Endothelial cell of umbilical vein (primary cell): ENCODE measurements at regions of chr12 and their contacts with region 1.

Region 1: DNA sequence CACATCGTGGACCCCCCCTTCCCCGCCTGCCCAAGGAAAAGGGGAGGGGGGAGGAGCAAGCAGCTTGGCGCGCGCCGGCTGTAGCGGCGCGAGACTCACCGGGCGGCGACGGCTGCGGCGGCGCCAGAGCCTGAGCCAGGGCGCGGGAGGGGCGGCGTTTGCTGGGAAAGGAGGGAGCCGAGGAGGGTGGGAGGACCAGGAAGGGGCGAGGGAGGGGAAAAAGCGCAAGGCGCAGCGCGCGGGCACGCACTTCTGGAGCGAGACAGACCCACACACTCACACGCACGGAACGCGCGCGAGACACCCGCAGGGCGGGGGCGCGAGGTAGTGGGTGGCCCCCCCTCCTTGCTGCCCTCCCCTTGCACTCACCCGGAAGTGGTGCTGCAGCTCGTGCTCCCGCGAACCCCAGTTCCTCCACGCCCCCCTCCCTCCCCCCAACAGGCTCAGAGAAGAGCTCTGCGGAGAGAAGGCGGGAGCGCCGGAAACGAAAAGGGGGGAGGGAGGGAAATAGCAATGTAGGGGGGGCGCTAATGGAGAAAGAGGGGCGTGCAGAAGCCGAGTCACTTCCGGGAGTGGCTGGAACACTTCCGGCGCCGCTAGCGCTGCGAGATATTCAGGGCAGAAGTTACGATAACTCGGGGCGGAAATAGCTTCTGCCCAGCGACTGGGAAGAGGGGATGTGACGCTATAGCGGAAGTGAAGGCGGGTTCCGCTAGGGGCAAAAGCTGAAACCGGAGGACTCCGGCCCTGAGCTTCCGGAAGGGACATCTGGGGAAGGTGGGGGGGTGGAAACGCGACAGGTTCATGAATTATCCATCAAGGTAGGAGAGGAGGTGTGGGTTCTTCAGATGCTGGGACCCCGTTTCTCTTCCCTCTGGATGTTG is at the start of gene ZNF384:
- DNase-seq: peak; percentile 98
- H3K4me3 ChIP-seq: peak within 1 kb of the TSS; percentile 65 to 99 (median 89)
- H3K27ac ChIP-seq: peak within 1 kb of the TSS; percentile 83
- H3K4me1 ChIP-seq: peaks cover 21% of the 10 kb centered on the region
- H3K27me3 ChIP-seq: no peaks in the 10 kb centered on the region
- CTCF ChIP-seq: peak in 1 of 2 donors; percentile 3
- POLR2A ChIP-seq: peak; percentile 92
- total RNA-seq, gene ZNF384: 52.8 and 58.5 TPM in 2 replicates

Region 2: GRCh38 chr12:6620137-6620884 is 68.9 kb before region 1 on chr12:
- CTCF ChIA-PET with region 1: interaction called, 21 read pairs
- POLR2A ChIA-PET with region 1: interaction called, 3 read pairs
- dilution Hi-C with region 1: no loop called
- intact Hi-C with region 1: loop called (anchors 1 kb)
- DNase-seq: peak; percentile 79
- H3K4me3 ChIP-seq: peak overlapping the region in 1 of 3 experiments; percentile 6
- H3K27ac ChIP-seq: no peak overlapping the region
- H3K4me1 ChIP-seq: no peaks in the 10 kb centered on the region
- H3K27me3 ChIP-seq: no peaks in the 10 kb centered on the region
- CTCF ChIP-seq: peak; percentile 85 to 89
- POLR2A ChIP-seq: no peak

Region 3: GRCh38 chr12:6672143-6672542 is 17.1 kb before region 1 on chr12:
- CTCF ChIA-PET with region 1: interaction called, 13 read pairs
- POLR2A ChIA-PET with region 1: interaction called, 3 read pairs
- dilution Hi-C with region 1: no loop called
- intact Hi-C with region 1: no loop called
- DNase-seq: no peak
- H3K4me3 ChIP-seq: no peak overlapping the region
- H3K27ac ChIP-seq: no peak overlapping the region
- H3K4me1 ChIP-seq: no peaks in the 10 kb centered on the region
- H3K27me3 ChIP-seq: no peaks in the 10 kb centered on the region
- CTCF ChIP-seq: no peak
- POLR2A ChIP-seq: no peak

Region 4: DNA sequence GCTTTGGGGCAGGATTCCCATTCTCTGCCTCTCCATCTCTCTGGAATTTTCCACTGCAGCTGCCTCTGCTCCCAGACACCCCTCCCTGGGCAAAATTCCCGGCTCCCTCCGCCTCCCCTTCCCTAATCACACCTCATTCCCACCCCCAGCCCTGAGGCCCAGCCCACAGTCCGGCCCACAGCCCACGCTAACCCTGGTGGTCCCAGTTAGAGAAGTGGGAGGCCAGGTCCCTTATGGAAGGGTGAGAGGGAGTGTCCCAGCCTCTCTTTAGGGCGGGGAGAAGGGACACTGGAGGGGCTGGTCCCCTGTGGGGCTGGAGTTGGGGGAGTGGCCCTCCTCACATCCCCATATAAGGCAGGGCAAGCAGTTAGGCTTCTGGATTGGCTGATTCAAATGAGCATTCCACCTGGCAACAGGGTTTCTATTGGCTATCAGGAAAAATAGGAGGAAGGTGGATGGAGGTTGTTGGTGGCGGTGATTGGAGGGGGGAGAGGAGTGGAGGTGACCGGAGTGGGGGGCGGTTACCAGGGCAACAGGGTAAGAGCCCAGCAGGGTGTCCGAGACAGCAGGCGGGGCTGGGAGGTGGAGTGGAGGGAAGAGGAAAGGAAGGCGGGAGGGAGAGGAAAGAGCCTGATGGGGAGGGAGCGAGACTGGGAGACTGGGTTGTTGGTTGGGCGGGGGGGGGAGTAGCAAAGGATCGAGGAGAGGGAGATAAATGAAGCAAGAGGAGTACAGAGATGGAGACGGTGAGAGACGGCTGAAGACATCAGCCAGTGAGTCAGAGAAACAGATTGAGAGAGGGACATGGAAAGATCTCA is 75.0 kb after region 1 on chr12:
- CTCF ChIA-PET with region 1: interaction called, 9 read pairs
- POLR2A ChIA-PET with region 1: interaction called, 8 read pairs
- dilution Hi-C with region 1: no loop called
- intact Hi-C with region 1: loop called (anchors 1 kb)
- DNase-seq: peak; percentile 99
- H3K4me3 ChIP-seq: peak overlapping the region in 1 of 3 experiments; percentile 36
- H3K27ac ChIP-seq: peak overlapping the region; percentile 70
- H3K4me1 ChIP-seq: peaks cover 38% of the 10 kb centered on the region
- H3K27me3 ChIP-seq: peaks cover 0 to 2% of the 10 kb centered on the region in 2 experiments
- CTCF ChIP-seq: no peak
- POLR2A ChIP-seq: no peak